ENCODE measurements at regions of chr1 and their contacts with region 1.

Region 1: DNA sequence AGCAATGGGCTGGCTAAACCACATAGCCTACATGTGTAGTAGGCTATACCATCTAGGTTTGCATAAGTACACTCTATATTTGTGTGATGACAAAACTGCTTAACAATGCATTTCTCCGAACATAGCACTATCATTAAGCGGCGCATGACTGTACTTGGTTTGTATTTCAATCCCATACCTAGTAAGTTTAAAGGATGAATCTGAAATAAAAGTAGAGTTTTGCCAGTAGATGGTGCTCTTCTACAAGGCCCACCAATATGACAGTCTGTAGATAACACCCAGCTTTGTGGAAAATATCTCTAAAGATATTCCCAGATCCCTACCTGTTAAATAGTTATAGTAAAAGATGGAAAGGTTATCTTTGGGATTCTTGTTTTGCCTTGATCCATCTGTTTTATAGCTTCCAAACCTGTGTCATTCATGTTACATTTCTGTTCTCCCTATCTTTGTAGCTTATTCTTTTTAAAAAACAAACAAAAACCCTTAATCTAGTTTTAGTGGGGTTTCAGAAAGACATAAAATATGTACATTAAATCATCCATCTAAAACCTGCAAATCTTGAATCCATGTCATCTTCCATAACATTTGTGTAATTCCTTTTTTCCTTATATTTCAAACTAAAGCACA is 33.9 kb upstream of the ASPM start:
- DNase-seq: peak; percentile 64
- H3K4me3 Mint-ChIP-seq: no peak overlapping the region
- H3K27ac Mint-ChIP-seq: no peak overlapping the region
- H3K4me1 Mint-ChIP-seq: no peaks in the 10 kb centered on the region
- H3K27me3 Mint-ChIP-seq: no peaks in the 10 kb centered on the region
- CTCF ChIP-seq: peak; percentile 62

Region 2: GRCh38 chr1:196977278-196977677 is 203.1 kb before region 1 on chr1 and contains the start of gene CFHR5:
- CTCF ChIA-PET with region 1: no interaction called
- POLR2A ChIA-PET with region 1: no interaction called
- intact Hi-C with region 1: no loop called
- DNase-seq: no peak
- H3K4me3 Mint-ChIP-seq: no peak within 1 kb of the TSS
- H3K27ac Mint-ChIP-seq: no peak within 1 kb of the TSS
- H3K4me1 Mint-ChIP-seq: no peaks in the 10 kb centered on the region
- H3K27me3 Mint-ChIP-seq: no peaks in the 10 kb centered on the region
- CTCF ChIP-seq: no peak
- total RNA-seq, gene CFHR5: not detected in 2 replicates

Region 3: DNA sequence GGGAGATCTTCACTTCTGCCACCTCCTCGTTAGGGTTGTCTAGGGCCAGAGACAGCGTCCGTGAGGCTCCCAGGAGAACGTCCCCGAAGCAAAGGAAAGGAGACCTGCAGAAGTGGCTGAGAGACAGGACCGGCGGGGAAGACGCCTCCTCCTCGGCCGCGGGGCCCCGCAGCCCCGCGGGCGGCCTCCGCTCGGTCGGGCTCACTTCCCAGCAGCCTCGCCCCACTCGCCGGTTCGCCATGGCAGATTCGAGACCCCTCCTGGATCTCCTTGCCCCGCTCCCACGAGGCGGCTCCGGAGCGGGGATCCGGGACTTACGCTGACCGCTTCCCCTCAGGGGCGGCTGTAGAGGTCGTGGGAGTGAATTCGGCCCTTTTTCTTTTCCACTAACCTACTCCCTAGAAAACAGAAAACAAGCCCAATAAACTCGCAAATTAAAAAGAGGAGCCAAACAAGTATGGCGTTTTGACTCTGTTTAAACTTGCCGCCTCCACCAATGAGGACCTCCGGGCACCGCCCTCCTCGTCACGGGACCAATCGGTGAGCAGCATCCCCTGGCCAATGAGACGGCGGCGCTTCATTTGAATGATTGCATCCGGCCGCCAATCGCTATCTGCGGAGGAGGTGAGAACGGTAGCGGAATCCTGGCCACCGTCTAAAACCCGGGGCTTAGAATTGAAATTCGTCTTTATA is 34.0 kb before region 1 on chr1 and contains the start of gene ASPM:
- CTCF ChIA-PET with region 1: interaction called, 12 read pairs
- POLR2A ChIA-PET with region 1: interaction called, 3 read pairs
- intact Hi-C with region 1: no loop called
- DNase-seq: peak; percentile 99
- H3K4me3 Mint-ChIP-seq: peak within 1 kb of the TSS; percentile 87
- H3K27ac Mint-ChIP-seq: peak within 1 kb of the TSS; percentile 89
- H3K4me1 Mint-ChIP-seq: peaks cover 23% of the 10 kb centered on the region
- H3K27me3 Mint-ChIP-seq: no peaks in the 10 kb centered on the region
- CTCF ChIP-seq: no peak
- total RNA-seq, gene ASPM: 22.3 and 32.8 TPM in 2 replicates

Region 4: DNA sequence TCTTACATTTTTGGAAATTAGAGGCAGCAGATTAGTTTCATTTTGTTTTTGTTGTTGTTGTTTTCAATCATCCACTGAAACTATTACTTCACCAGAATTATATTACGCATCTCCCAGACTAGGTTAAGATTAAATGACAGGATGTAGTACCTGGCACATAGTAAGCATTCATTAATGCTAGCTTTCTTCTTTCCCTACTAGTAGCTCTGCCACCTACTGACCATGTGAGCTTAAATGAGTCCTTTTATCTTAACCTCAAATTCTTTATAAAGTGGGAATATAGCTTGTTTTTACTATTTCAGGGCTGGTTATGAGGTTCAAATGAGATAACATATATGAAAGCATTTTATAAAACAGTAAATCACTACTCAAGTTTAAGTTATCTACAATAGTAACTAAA is 23.7 kb before region 1 on chr1:
- CTCF ChIA-PET with region 1: interaction called, 14 read pairs
- POLR2A ChIA-PET with region 1: interaction called, 4 read pairs
- intact Hi-C with region 1: no loop called
- DNase-seq: no peak
- H3K4me3 Mint-ChIP-seq: no peak overlapping the region
- H3K27ac Mint-ChIP-seq: no peak overlapping the region
- H3K4me1 Mint-ChIP-seq: no peaks in the 10 kb centered on the region
- H3K27me3 Mint-ChIP-seq: no peaks in the 10 kb centered on the region
- CTCF ChIP-seq: no peak

Region 5: GRCh38 chr1:197195100-197195499 is 14.7 kb after region 1 on chr1:
- CTCF ChIA-PET with region 1: interaction called, 49 read pairs
- POLR2A ChIA-PET with region 1: interaction called, 3 read pairs
- intact Hi-C with region 1: no loop called
- DNase-seq: no peak
- H3K4me3 Mint-ChIP-seq: no peak overlapping the region
- H3K27ac Mint-ChIP-seq: peak overlapping the region; percentile 34
- H3K4me1 Mint-ChIP-seq: peaks cover 37% of the 10 kb centered on the region
- H3K27me3 Mint-ChIP-seq: no peaks in the 10 kb centered on the region
- CTCF ChIP-seq: no peak

Region 6: GRCh38 chr1:197224160-197224559 is 43.8 kb after region 1 on chr1:
- CTCF ChIA-PET with region 1: interaction called, 13 read pairs
- POLR2A ChIA-PET with region 1: no interaction called
- intact Hi-C with region 1: no loop called
- DNase-seq: peak; percentile 25
- H3K4me3 Mint-ChIP-seq: no peak overlapping the region
- H3K27ac Mint-ChIP-seq: no peak overlapping the region
- H3K4me1 Mint-ChIP-seq: no peaks in the 10 kb centered on the region
- H3K27me3 Mint-ChIP-seq: no peaks in the 10 kb centered on the region
- CTCF ChIP-seq: peak; percentile 33

Region 7: DNA sequence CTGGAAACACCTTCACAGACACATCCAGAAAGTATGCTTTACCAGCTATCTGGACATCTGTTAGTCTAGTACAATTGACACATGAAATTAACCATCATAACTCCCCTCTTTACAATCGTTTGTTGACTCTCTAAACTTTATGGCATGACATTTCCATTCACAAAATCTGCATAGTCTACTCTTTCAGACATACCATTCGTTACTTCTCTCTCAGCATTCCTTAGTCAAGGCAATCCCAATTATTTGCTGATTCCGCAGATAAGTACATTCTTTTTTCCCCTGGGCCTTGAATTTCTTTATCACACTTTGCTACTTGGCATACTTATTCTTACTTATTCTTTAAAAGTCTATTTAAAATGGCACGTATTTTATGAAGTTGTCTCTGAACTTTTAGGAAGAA is 72.6 kb after region 1 on chr1:
- CTCF ChIA-PET with region 1: no interaction called
- POLR2A ChIA-PET with region 1: no interaction called
- intact Hi-C with region 1: no loop called
- DNase-seq: no peak
- H3K4me3 Mint-ChIP-seq: no peak overlapping the region
- H3K27ac Mint-ChIP-seq: no peak overlapping the region
- H3K4me1 Mint-ChIP-seq: no peaks in the 10 kb centered on the region
- H3K27me3 Mint-ChIP-seq: no peaks in the 10 kb centered on the region
- CTCF ChIP-seq: no peak

Region 8: DNA sequence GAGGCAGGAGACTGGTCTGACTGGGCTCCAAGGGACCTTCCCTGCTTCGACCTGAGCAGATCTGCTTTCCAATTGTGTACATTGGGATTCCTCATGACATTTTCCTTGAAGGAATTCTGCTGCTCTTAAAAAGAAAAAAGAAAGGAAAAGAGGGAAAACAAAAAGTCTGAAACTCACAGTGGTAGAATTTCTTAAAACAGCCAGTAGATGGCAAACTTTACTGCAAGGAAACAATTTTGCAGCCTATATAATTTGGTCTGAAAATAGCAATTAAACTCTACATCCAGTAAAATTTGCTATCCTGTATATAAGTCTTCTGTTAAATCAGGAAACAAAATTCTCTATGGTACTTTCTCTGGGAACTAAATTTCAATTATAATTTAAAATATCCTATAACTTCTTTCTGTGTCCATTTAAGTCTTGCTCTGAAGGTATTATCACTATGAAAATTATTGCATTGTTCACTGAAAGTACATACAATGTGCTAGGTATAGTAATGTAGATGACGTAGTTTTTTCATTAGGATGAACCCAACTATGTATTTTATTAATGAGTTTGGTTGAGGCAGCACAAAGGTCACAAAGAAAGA is 147.5 kb after region 1 on chr1:
- CTCF ChIA-PET with region 1: interaction called, 9 read pairs
- POLR2A ChIA-PET with region 1: no interaction called
- intact Hi-C with region 1: loop called (anchors 2 kb)
- DNase-seq: peak; percentile 33
- H3K4me3 Mint-ChIP-seq: no peak overlapping the region
- H3K27ac Mint-ChIP-seq: no peak overlapping the region
- H3K4me1 Mint-ChIP-seq: no peaks in the 10 kb centered on the region
- H3K27me3 Mint-ChIP-seq: no peaks in the 10 kb centered on the region
- CTCF ChIP-seq: peak; percentile 43

Measured in MCF 10A (cell line).